ENCODE measurements at regions of chr5 and their contacts with region 1.

Region 1: GRCh38 chr5:125484742-125485641 is 738.6 kb upstream of the ZNF608 start:
- DNase-seq: peak; percentile 83
- H3K4me3 ChIP-seq: no peak overlapping the region
- H3K27ac ChIP-seq: peak overlapping the region; percentile 64 to 70
- H3K4me1 ChIP-seq: peaks cover 12% of the 10 kb centered on the region
- H3K27me3 ChIP-seq: no peaks in the 10 kb centered on the region
- CTCF ChIP-seq: no peak
- POLR2A ChIP-seq: no peak

Region 2: DNA sequence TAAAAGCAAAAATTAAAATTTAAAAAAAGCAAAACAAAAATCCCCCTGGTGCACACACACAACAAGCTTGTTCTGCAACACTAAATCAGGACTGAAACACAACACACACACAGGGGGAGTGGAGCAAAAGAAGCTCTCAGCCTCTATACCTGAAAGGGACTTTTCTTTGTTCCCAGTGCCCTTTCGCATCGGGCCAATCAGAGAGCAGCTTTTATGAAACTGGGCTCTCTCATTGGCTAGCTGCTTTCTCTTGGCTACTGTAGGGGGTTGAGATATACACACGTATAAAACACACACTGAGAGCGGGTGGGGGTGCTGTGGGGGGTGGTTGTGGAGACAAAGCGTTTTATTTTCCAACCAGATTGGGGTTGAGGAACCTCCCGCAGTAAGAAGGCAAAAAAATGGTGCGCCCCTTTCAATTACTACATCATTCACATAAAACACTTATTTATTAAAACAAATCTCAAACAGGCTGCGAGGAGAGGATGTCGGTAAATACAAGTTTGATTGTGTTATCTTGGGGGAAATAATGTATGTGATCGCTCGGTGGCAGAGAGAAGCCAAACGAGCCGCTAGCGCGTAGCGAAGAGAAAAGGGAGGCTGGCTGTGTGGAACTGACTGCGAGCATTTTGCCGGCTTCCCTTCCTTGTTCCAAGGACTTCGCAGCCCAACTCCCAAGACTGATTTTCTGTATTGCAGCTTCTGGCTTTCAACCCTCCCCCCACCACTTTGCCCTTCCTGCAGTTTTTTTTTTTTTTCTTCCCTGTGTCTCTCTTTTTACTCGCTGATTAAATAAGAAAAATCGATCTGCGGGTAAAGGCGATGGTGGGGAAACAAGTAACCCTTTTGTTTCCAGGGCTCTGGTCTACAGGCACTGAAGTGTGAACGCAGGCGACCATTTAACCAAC is 736.1 kb before region 1 on chr5:
- intact Hi-C with region 1: loop called (anchors 5 kb)
- DNase-seq: peak; percentile 93
- H3K4me3 ChIP-seq: peak overlapping the region; percentile 33 to 49
- H3K27ac ChIP-seq: peak overlapping the region; percentile 83 to 87
- H3K4me1 ChIP-seq: peaks cover 3% of the 10 kb centered on the region
- H3K27me3 ChIP-seq: no peaks in the 10 kb centered on the region
- CTCF ChIP-seq: no peak
- POLR2A ChIP-seq: peak; percentile 51

Region 3: GRCh38 chr5:124824637-124825158 is 660.3 kb before region 1 on chr5:
- intact Hi-C with region 1: loop called (anchors 5 kb)
- DNase-seq: no peak
- H3K4me3 ChIP-seq: no peak overlapping the region
- H3K27ac ChIP-seq: no peak overlapping the region
- H3K4me1 ChIP-seq: no peaks in the 10 kb centered on the region
- H3K27me3 ChIP-seq: no peaks in the 10 kb centered on the region
- CTCF ChIP-seq: no peak
- POLR2A ChIP-seq: no peak

Region 4: GRCh38 chr5:124902097-124902821 is 582.7 kb before region 1 on chr5:
- intact Hi-C with region 1: loop called (anchors 10 kb)
- DNase-seq: no peak
- H3K4me3 ChIP-seq: no peak overlapping the region
- H3K27ac ChIP-seq: no peak overlapping the region
- H3K4me1 ChIP-seq: peaks cover 3% of the 10 kb centered on the region
- H3K27me3 ChIP-seq: no peaks in the 10 kb centered on the region
- CTCF ChIP-seq: no peak
- POLR2A ChIP-seq: no peak

Region 5: GRCh38 chr5:124935065-124935464 is 549.9 kb before region 1 on chr5:
- intact Hi-C with region 1: loop called (anchors 10 kb)
- DNase-seq: no peak
- H3K4me3 ChIP-seq: no peak overlapping the region
- H3K27ac ChIP-seq: no peak overlapping the region
- H3K4me1 ChIP-seq: no peaks in the 10 kb centered on the region
- H3K27me3 ChIP-seq: no peaks in the 10 kb centered on the region
- CTCF ChIP-seq: no peak
- POLR2A ChIP-seq: no peak

Region 6: GRCh38 chr5:125412561-125413495 is 72.2 kb before region 1 on chr5:
- intact Hi-C with region 1: loop called (anchors 5 kb)
- DNase-seq: peak; percentile 56
- H3K4me3 ChIP-seq: no peak overlapping the region
- H3K27ac ChIP-seq: peak overlapping the region in 1 of 2 donors; percentile 46
- H3K4me1 ChIP-seq: peaks cover 18% of the 10 kb centered on the region
- H3K27me3 ChIP-seq: no peaks in the 10 kb centered on the region
- CTCF ChIP-seq: peak in 2 of 4 experiments; percentile 32 to 37
- POLR2A ChIP-seq: no peak

Region 7: GRCh38 chr5:125582352-125582751 is 97.4 kb after region 1 on chr5:
- intact Hi-C with region 1: loop called (anchors 5 kb)
- DNase-seq: no peak
- H3K4me3 ChIP-seq: no peak overlapping the region
- H3K27ac ChIP-seq: no peak overlapping the region
- H3K4me1 ChIP-seq: no peaks in the 10 kb centered on the region
- H3K27me3 ChIP-seq: no peaks in the 10 kb centered on the region
- CTCF ChIP-seq: no peak
- POLR2A ChIP-seq: no peak

Region 8: GRCh38 chr5:125634216-125634835 is 149.3 kb after region 1 on chr5:
- intact Hi-C with region 1: no loop called
- DNase-seq: no peak
- H3K4me3 ChIP-seq: no peak overlapping the region
- H3K27ac ChIP-seq: no peak overlapping the region
- H3K4me1 ChIP-seq: no peaks in the 10 kb centered on the region
- H3K27me3 ChIP-seq: no peaks in the 10 kb centered on the region
- CTCF ChIP-seq: no peak
- POLR2A ChIP-seq: no peak

Region 9: GRCh38 chr5:125659316-125660023 is 174.5 kb after region 1 on chr5:
- intact Hi-C with region 1: no loop called
- DNase-seq: no peak
- H3K4me3 ChIP-seq: no peak overlapping the region
- H3K27ac ChIP-seq: no peak overlapping the region
- H3K4me1 ChIP-seq: no peaks in the 10 kb centered on the region
- H3K27me3 ChIP-seq: no peaks in the 10 kb centered on the region
- CTCF ChIP-seq: no peak
- POLR2A ChIP-seq: no peak

Measured in prostate gland (tissue), 2 donors.